CD4-positive, alpha-beta memory T cell (primary cell): ENCODE measurements at regions of chr13 and their contacts with region 1.

Region 1: DNA sequence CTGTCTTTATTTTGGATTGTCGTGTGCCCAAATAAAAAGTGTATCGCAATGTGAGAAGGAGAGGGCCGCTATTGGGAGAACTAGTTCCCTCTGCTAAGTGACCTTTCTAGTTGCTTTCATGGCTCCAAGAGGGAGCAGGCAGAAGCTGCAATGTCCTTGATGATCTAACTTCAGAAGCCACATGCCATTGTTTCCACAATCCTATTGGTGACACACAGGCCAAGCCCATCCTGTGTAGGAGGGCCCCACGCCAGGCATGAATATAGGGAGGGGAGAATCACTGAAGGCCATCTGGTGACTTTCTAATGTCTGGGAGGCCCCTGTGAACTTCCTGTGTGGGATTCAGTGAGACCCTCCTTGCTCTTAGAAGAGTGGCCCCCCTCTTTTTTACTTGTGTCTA is 47.8 kb upstream of the KPNA3 start:
- DNase-seq: no peak
- H3K4me3 ChIP-seq: no peak overlapping the region
- H3K4me3 Mint-ChIP-seq: no peak overlapping the region
- H3K27ac ChIP-seq: no peak overlapping the region
- H3K27ac Mint-ChIP-seq: no peak overlapping the region
- H3K4me1 ChIP-seq: no peaks in the 10 kb centered on the region
- H3K4me1 Mint-ChIP-seq: no peaks in the 10 kb centered on the region
- H3K27me3 ChIP-seq: no peaks in the 10 kb centered on the region
- H3K27me3 Mint-ChIP-seq: peaks cover 0 to 1% of the 10 kb centered on the region in 2 donors

Region 2: DNA sequence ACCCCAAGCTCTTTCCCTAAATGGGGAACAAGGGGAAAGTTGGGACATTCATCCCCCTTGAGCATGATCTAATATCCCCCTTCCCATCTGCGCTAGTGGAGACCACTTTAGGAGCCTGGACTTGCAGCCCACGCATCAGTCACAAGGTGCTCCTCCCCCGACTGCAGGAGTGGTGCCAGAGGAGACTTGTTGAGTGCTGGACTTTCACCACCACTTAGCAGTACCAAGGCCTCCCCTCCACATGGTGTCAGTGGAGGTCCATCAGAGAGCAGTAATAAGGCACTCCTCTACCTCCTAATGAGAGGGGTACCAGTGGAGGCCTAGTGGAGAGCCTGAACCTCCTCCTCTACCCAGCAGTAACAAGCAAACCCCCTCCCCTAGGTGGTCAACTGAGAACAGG is 418.9 kb before region 1 on chr13:
- CTCF ChIA-PET with region 1: no interaction called
- POLR2A ChIA-PET with region 1: no interaction called
- intact Hi-C with region 1: loop called (anchors 5 kb)
- DNase-seq: peak in 4 of 5 donors; percentile 5 to 19 (median 13)
- H3K4me3 ChIP-seq: no peak overlapping the region
- H3K4me3 Mint-ChIP-seq: no peak overlapping the region
- H3K27ac ChIP-seq: no peak overlapping the region
- H3K27ac Mint-ChIP-seq: no peak overlapping the region
- H3K4me1 ChIP-seq: no peaks in the 10 kb centered on the region
- H3K4me1 Mint-ChIP-seq: no peaks in the 10 kb centered on the region
- H3K27me3 ChIP-seq: no peaks in the 10 kb centered on the region
- H3K27me3 Mint-ChIP-seq: peaks cover 0 to 2% of the 10 kb centered on the region in 2 donors